ENCODE measurements at regions of chr10 and their contacts with region 1.

Region 1: DNA sequence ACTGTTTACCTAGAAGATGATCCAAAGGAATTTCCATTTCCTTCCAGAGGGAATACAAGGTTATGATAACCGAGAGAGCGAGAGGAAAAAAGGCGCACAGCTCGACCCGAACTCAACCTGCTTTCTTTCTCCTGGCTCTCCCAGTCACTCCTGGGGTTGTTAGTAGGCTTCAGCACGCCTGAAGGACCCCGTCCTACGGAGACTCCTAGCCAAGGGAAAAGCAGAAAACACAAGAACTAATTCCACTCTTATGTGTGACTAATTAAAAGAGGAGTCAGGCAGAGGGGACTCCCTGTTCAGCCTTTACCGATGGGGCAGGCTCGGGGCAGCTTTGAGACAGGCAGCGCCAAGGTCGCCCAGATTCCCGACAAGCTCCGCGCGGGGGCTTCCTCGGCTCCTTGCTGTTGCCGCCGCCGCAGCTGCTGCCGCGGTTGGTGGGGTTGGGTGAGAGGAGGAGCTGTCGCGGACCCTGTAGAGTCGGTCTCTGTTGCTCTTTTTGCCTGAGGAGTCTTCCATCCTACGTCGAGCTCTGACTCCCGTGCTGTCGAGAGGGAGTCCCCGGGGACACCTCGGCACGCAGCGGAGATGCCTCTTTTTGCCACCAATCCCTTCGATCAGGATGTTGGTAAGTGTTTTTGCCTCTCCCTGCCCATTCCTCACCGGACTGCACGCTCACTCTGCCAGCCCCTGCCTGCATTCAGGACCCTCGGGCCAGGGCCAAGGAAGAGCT is at the start of gene STAM:
- DNase-seq: peak; percentile 96
- ATAC-seq: peak; percentile 79
- H3K4me3 Mint-ChIP-seq: peak within 1 kb of the TSS; percentile 90
- H3K27ac Mint-ChIP-seq: peak within 1 kb of the TSS; percentile 100
- H3K4me1 Mint-ChIP-seq: peaks cover 55% of the 10 kb centered on the region
- H3K27me3 Mint-ChIP-seq: no peaks in the 10 kb centered on the region
- CTCF ChIP-seq: no peak
- total RNA-seq, gene STAM: 21.6 to 24.5 TPM

Region 2: DNA sequence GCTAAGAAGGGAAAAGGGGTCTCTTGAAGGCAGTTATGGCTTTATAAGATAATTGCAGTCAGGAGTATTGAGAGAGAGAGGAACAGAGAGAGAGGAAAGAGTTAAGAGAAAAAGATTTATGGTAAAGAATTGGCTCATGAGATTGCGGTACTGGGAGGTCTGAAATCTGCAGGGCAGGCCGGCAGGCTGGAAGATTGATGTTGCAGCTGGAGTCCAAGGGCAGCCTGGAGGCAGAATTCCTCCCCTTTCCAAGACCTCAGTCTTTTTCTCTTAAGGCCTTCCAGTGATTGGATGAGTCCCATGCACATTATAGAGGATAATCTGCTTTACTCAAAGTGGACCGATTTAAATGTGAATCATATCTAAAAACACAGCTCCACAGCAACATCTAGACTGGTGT is 95.2 kb before region 1 on chr10:
- CTCF ChIA-PET with region 1: no interaction called
- POLR2A ChIA-PET with region 1: no interaction called
- intact Hi-C with region 1: no loop called
- DNase-seq: no peak
- ATAC-seq: no peak
- H3K4me3 Mint-ChIP-seq: no peak overlapping the region
- H3K27ac Mint-ChIP-seq: no peak overlapping the region
- H3K4me1 Mint-ChIP-seq: no peaks in the 10 kb centered on the region
- H3K27me3 Mint-ChIP-seq: peaks cover under 1% of the 10 kb centered on the region
- CTCF ChIP-seq: no peak

Region 3: GRCh38 chr10:17617031-17617911 is 26.6 kb before region 1 on chr10 and contains the start of gene HACD1:
- CTCF ChIA-PET with region 1: interaction called, 10 read pairs
- POLR2A ChIA-PET with region 1: interaction called, 6 read pairs
- intact Hi-C with region 1: no loop called
- DNase-seq: peak; percentile 69
- ATAC-seq: peak; percentile 81
- H3K4me3 Mint-ChIP-seq: peak within 1 kb of the TSS; percentile 79
- H3K27ac Mint-ChIP-seq: peak within 1 kb of the TSS; percentile 25
- H3K4me1 Mint-ChIP-seq: peaks cover 4% of the 10 kb centered on the region
- H3K27me3 Mint-ChIP-seq: peaks cover 12% of the 10 kb centered on the region
- CTCF ChIP-seq: peak; percentile 25
- total RNA-seq, gene HACD1: 2.6 to 2.8 TPM

Region 4: GRCh38 chr10:17655567-17656146 is 11.7 kb after region 1 on chr10:
- CTCF ChIA-PET with region 1: interaction called, 3 read pairs
- POLR2A ChIA-PET with region 1: interaction called, 19 read pairs
- intact Hi-C with region 1: no loop called
- DNase-seq: no peak
- ATAC-seq: peak; percentile 52
- H3K4me3 Mint-ChIP-seq: peak overlapping the region; percentile 10
- H3K27ac Mint-ChIP-seq: peak overlapping the region; percentile 66
- H3K4me1 Mint-ChIP-seq: peaks cover 70% of the 10 kb centered on the region
- H3K27me3 Mint-ChIP-seq: no peaks in the 10 kb centered on the region
- CTCF ChIP-seq: no peak

Region 5: GRCh38 chr10:17662193-17663138 is 18.5 kb after region 1 on chr10:
- CTCF ChIA-PET with region 1: interaction called, 3 read pairs
- POLR2A ChIA-PET with region 1: interaction called, 15 read pairs
- intact Hi-C with region 1: no loop called
- DNase-seq: no peak
- ATAC-seq: peak; percentile 24
- H3K4me3 Mint-ChIP-seq: peak overlapping the region; percentile 46
- H3K27ac Mint-ChIP-seq: peak overlapping the region; percentile 2
- H3K4me1 Mint-ChIP-seq: peaks cover 54% of the 10 kb centered on the region
- H3K27me3 Mint-ChIP-seq: no peaks in the 10 kb centered on the region
- CTCF ChIP-seq: no peak

Region 6: GRCh38 chr10:17682236-17682946 is 38.5 kb after region 1 on chr10:
- CTCF ChIA-PET with region 1: interaction called, 3 read pairs
- POLR2A ChIA-PET with region 1: interaction called, 3 read pairs
- intact Hi-C with region 1: loop called (anchors 1 kb)
- DNase-seq: no peak
- ATAC-seq: peak; percentile 13
- H3K4me3 Mint-ChIP-seq: no peak overlapping the region
- H3K27ac Mint-ChIP-seq: peak overlapping the region; percentile 79
- H3K4me1 Mint-ChIP-seq: peaks cover 60% of the 10 kb centered on the region
- H3K27me3 Mint-ChIP-seq: no peaks in the 10 kb centered on the region
- CTCF ChIP-seq: no peak

Measured in activated CD8-positive, alpha-beta T cell treated with anti-CD3 and anti-CD28 coated beads for 36 hours (primary cell).